Right cardiac atrium (tissue), 5 donors: ENCODE measurements at regions of chr15 and their contacts with region 1.

Region 1: GRCh38 chr15:47196057-47196456 is 521.2 kb upstream of the SEMA6D start:
- DNase-seq: peak; percentile 77 to 88 (median 87)
- ATAC-seq: peak; percentile 95 to 97
- H3K4me3 ChIP-seq: no peak overlapping the region
- H3K27ac ChIP-seq: no peak overlapping the region
- H3K4me1 ChIP-seq: no peaks in the 10 kb centered on the region
- H3K27me3 ChIP-seq: peaks cover 3% of the 10 kb centered on the region

Region 2: GRCh38 chr15:47717036-47717611 is 521.1 kb after region 1 on chr15 and contains the start of gene SEMA6D:
- intact Hi-C with region 1: loop called in 1 of 4 experiments (anchors 10 kb)
- DNase-seq: peak; percentile 83 to 94 (median 94)
- ATAC-seq: peak; percentile 84 to 91
- H3K4me3 ChIP-seq: peak within 1 kb of the TSS; percentile 96
- H3K27ac ChIP-seq: peak within 1 kb of the TSS; percentile 95
- H3K4me1 ChIP-seq: peaks cover 4% of the 10 kb centered on the region
- H3K27me3 ChIP-seq: no peaks in the 10 kb centered on the region
- total RNA-seq, gene SEMA6D: 7.0 to 28.3 (median 22.3) TPM

Region 3: DNA sequence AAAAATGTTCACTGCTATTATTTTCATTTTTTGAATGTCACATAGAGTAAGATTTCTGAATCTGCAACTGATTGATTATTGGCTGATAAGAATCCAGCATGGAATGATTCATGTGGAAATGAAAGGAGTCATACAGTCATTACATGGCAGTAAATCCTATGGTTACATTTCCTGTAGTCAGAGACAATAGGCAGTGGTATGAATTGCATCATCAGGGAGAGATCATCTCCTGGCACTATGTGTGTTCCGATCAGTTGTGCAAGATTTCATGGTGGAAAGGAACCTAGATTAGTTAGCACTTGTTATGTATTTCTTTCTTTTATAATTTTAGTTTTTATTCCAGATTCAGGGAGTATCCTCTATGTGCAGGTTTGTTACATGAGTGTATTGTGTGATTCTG is 1048.9 kb after region 1 on chr15:
- intact Hi-C with region 1: loop called in 1 of 4 experiments (anchors 10 kb)
- DNase-seq: no peak
- ATAC-seq: no peak
- H3K4me3 ChIP-seq: no peak overlapping the region
- H3K27ac ChIP-seq: no peak overlapping the region
- H3K4me1 ChIP-seq: no peaks in the 10 kb centered on the region
- H3K27me3 ChIP-seq: no peaks in the 10 kb centered on the region

Region 4: GRCh38 chr15:48285329-48286214 is 1089.5 kb after region 1 on chr15:
- intact Hi-C with region 1: loop called in 2 of 4 experiments (anchors 5 to 10 kb)
- DNase-seq: peak; percentile 31 to 67 (median 45)
- ATAC-seq: peak; percentile 77 to 86
- H3K4me3 ChIP-seq: peak overlapping the region; percentile 14
- H3K27ac ChIP-seq: no peak overlapping the region
- H3K4me1 ChIP-seq: peaks cover 1% of the 10 kb centered on the region
- H3K27me3 ChIP-seq: no peaks in the 10 kb centered on the region